ENCODE measurements at regions of chr10 and their contacts with region 1.

Region 1: GRCh38 chr10:129971381-129972144 is 7.5 kb upstream of the EBF3 start:
- DNase-seq: peak in 1 of 2 donors; percentile 73
- ATAC-seq: peak; percentile 82 to 91 (median 86)
- H3K4me3 ChIP-seq: peak overlapping the region in 9 of 10 donors; percentile 29 to 69 (median 51)
- H3K27ac ChIP-seq: no peak overlapping the region
- H3K4me1 ChIP-seq: peaks cover 0 to 42% (median 34%) of the 10 kb centered on the region in 9 donors
- H3K27me3 ChIP-seq: peaks cover 8 to 98% (median 83%) of the 10 kb centered on the region in 7 donors
- CTCF ChIP-seq: peak; percentile 38 to 84 (median 68)

Region 2: DNA sequence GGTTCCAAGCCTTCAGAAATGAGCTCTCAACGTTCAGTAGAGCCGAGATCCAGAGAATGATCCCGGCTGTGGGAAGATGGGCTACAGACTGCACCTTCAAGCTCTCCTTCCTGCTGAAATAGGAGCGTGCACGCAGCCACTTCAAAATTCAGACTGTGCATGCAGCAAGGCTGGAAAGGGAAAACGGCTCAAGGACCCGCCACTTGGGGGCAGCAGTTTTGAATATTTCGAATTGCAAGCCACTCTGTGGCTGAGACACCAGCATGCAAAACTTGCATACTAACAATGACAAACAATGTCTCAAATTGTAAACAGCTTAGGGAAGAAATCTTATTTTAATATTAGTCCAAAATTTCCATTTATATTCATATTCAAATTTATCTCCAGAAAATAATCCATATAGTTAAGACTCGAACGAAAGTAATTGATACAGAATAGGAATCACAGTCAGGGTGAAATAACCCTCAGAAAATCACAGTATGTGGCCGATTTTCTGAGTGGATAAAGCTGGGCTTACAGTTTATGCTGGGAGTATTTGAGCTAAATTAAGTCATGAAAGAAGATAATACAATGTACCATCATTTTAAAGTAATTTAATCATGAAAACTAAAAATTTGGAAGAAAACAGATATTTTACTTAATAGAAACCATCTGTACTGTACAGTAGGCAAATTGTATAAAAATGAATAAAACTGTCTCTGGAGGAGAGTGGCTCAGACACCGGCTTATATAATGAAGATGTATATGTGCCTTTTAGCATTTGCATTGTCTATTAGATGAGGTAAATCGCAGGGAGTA is 1707.5 kb before region 1 on chr10:
- intact Hi-C with region 1: loop called in 4 of 10 experiments (anchors 5 to 10 kb)
- DNase-seq: peak; percentile 61 to 66
- ATAC-seq: peak in 3 of 8 donors; percentile 43 to 56 (median 54)
- H3K4me3 ChIP-seq: no peak overlapping the region
- H3K27ac ChIP-seq: no peak overlapping the region
- H3K4me1 ChIP-seq: no peaks in the 10 kb centered on the region
- H3K27me3 ChIP-seq: peaks cover 0 to 84% (median 68%) of the 10 kb centered on the region in 7 donors
- CTCF ChIP-seq: peak; percentile 25 to 74 (median 64)

Region 3: DNA sequence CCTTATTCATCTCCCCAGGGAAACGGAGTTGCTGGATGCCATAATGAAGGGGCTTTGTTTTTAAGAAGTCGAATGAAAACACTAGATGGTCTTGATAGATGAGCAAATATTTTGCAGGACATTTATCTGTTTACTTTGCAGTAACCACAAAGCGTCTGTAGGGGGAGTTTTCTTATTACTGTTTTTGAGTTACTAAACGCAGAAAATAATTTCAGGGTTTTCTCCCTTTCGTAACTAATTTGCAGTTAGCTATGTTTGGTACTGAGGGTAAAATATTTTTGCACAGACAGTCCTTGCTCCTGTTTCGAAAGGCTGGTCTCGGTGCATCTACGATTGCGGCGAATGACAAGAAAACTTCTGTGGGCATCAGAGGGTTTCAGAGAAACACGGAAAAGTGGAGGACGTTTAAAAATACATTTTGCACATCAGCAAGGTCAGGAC is 1339.7 kb before region 1 on chr10:
- intact Hi-C with region 1: loop called in 4 of 10 experiments (anchors 5 to 10 kb)
- DNase-seq: peak in 1 of 2 donors; percentile 41
- ATAC-seq: peak in 1 of 8 donors; percentile 19
- H3K4me3 ChIP-seq: no peak overlapping the region
- H3K27ac ChIP-seq: no peak overlapping the region
- H3K4me1 ChIP-seq: peaks cover 0 to 16% (median 0%) of the 10 kb centered on the region in 9 donors
- H3K27me3 ChIP-seq: peaks cover 0 to 12% (median 4%) of the 10 kb centered on the region in 7 donors
- CTCF ChIP-seq: peak; percentile 56 to 73 (median 68)

Region 4: DNA sequence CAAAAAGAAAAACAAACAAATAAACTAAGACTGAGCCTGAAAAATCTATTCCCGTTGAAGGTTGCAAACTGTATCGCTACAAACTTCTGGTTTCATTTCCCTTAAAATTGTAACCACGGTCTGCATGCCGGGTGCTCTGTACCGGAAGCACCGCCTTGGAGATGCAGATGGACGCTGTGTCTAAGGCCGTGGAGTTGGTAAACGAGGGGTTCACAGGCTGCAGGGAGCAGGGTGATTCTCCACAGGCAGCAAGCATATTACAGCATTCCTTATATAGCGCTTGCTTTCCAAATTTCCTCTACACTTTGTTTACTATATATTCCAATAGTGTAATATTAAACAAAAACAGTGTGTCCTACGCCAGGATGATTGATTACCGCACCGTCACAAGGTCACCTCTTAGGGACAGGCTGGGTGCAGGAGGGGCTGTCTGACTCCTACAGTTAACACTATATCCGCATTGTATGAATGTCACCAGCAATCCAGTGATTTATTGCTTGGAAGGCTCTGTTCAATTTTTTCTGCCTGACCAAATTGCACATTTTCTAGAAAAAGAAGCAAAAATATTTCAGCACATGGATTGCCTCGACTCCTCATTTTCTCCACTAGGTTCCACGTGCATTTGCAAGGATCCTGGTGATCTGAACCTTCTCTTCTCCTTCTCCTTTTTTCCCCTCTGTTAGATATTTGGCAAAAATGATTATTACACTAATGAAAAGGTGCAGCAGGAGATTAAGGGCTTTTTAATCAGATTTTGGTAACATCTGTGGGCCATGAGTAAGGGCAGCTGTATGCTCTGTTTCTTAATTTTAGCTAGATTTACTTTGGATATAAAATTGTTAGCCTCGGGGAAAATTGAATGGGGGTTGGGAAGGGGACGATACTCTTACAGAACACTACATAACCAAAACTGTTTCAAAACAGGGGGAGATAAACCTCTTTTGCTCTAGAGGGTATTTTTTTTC is 830.4 kb before region 1 on chr10:
- intact Hi-C with region 1: loop called in 1 of 10 experiments (anchors 5 kb)
- DNase-seq: no peak
- ATAC-seq: peak in 1 of 8 donors; percentile 22
- H3K4me3 ChIP-seq: no peak overlapping the region
- H3K27ac ChIP-seq: no peak overlapping the region
- H3K4me1 ChIP-seq: peaks cover 0 to 4% (median 0%) of the 10 kb centered on the region in 9 donors
- H3K27me3 ChIP-seq: peaks cover 0 to 11% (median 0%) of the 10 kb centered on the region in 7 donors
- CTCF ChIP-seq: no peak

Region 5: GRCh38 chr10:129646973-129647372 is 324.6 kb before region 1 on chr10:
- intact Hi-C with region 1: no loop called
- DNase-seq: no peak
- ATAC-seq: no peak
- H3K4me3 ChIP-seq: no peak overlapping the region
- H3K27ac ChIP-seq: no peak overlapping the region
- H3K4me1 ChIP-seq: no peaks in the 10 kb centered on the region
- H3K27me3 ChIP-seq: no peaks in the 10 kb centered on the region
- CTCF ChIP-seq: no peak

Region 6: DNA sequence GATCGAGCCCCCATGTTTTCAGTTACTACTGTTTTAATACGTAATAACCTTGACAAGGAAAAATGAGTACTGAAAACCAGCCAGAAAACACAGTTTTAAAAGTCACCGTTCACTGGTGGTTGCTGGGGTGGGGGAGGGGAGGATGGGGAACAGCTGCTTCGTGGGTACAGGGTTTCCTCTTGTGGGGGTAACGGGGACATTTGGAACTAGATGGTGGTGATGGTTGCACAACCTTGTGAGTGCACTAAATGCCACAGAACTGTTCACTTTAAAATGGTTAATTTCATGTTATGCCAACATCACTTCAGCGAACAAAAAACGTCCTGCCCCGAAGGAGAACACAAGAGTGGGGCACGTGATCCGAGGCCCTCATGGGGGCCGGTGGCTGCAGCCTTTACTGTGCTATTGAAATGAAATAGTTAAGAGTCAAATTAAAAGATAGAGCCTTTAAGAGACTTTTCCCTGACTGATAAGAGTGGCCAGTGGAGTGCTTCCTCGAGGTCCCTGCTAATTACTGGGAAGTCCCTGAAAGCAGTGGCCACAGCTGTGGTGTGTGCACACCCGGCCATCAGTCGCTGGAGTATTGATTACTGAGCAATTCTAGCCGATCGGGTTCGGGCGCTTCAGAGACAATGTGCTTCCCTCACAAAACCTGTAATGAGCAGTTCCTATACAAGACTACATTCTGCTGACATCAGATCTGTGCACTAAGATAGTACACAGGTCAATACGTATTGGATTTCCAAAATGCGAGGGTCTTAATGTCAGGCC is 87.8 kb before region 1 on chr10:
- intact Hi-C with region 1: loop called in 5 of 10 experiments (anchors 2 to 10 kb)
- DNase-seq: no peak
- ATAC-seq: peak in 1 of 8 donors; percentile 18
- H3K4me3 ChIP-seq: no peak overlapping the region
- H3K27ac ChIP-seq: no peak overlapping the region
- H3K4me1 ChIP-seq: peaks cover 0 to 32% (median 13%) of the 10 kb centered on the region in 9 donors
- H3K27me3 ChIP-seq: peaks cover 0 to 5% (median 0%) of the 10 kb centered on the region in 7 donors
- CTCF ChIP-seq: no peak

Region 7: GRCh38 chr10:130110246-130111112 is 138.9 kb after region 1 on chr10 and contains the start of gene C10orf143:
- intact Hi-C with region 1: loop called in 1 of 10 experiments (anchors 5 kb)
- DNase-seq: peak; percentile 98 to 99
- ATAC-seq: peak; percentile 95 to 99 (median 96)
- H3K4me3 ChIP-seq: peak within 1 kb of the TSS; percentile 71 to 93 (median 78)
- H3K27ac ChIP-seq: peak within 1 kb of the TSS; percentile 84 to 98 (median 92)
- H3K4me1 ChIP-seq: peaks cover 0 to 37% (median 25%) of the 10 kb centered on the region in 9 donors
- H3K27me3 ChIP-seq: no peaks in the 10 kb centered on the region
- CTCF ChIP-seq: peak in 1 of 9 donors; percentile 11
- total RNA-seq, gene C10orf143: 1.1 to 2.9 (median 2.1) TPM

Measured in heart right ventricle (tissue), 16 donors.